IMR-90 (cell line): ENCODE measurements at regions of chr2 and their contacts with region 1.

Region 1: DNA sequence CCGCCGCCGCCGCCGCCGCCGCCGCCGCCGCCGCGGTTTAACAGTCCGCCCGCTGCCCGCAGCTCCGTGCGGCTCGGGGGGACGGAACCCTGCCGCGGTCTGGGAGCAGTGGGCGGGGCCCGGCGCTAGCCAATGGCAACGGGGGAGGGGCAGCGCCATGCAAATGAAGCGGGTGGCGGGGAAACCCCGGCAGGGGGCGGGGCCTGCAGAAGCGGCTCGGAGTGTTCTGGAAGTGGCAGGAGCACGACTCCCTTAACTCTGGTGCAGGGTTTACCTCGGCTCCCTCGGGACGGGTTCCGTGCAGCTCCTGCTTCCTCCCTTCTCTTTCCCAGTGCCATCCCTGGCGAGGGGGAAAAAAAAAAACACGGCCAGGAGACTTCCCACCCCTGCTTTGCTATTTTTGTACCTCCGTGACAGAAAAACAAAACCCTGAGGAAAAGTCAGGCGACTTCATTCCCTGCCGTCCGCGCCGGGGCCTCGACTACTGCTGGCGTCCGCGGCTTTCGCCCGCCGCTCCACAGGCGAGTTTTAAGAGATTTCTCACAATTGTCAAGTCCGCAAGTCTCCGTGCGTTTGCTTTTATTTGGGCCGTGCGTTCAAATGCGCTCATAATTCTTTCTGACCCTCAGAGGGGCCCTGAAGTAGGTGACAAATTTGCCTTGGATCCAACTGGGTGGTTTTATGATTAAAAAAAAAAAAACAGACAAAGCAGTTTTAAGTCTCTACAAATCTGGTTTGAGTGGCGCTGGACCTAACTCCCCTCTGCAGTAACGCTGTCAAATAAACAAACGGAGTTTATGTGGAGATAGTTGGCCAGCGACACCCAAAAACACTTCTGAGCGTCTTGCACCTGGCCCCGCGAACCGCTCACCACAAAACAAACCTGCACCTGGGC is at the start of gene KANSL1L:
- DNase-seq: peak; percentile 94
- ATAC-seq: peak; percentile 93
- H3K4me3 ChIP-seq: peak within 1 kb of the TSS; percentile 78
- H3K27ac ChIP-seq: peak within 1 kb of the TSS; percentile 97
- H3K4me1 ChIP-seq: no peaks in the 10 kb centered on the region
- H3K27me3 ChIP-seq: no peaks in the 10 kb centered on the region
- CTCF ChIP-seq: no peak
- POLR2A ChIP-seq: peak; percentile 57
- RAD21 ChIP-seq: no peak
- total RNA-seq, gene KANSL1L: 7.2 and 8.1 TPM in 2 replicates

Region 2: GRCh38 chr2:209990838-209991237 is 180.7 kb before region 1 on chr2:
- CTCF ChIA-PET with region 1: no interaction called
- POLR2A ChIA-PET with region 1: no interaction called
- dilution Hi-C with region 1: no loop called
- in situ Hi-C with region 1: loop called (anchors 10 kb)
- intact Hi-C with region 1: no loop called
- DNase-seq: no peak
- ATAC-seq: no peak
- H3K4me3 ChIP-seq: no peak overlapping the region
- H3K27ac ChIP-seq: no peak overlapping the region
- H3K4me1 ChIP-seq: no peaks in the 10 kb centered on the region
- H3K27me3 ChIP-seq: no peaks in the 10 kb centered on the region; the same call in none of the 2 replicates
- CTCF ChIP-seq: no peak
- POLR2A ChIP-seq: no peak
- RAD21 ChIP-seq: no peak

Region 3: GRCh38 chr2:210002158-210003157 is 169.1 kb before region 1 on chr2 and contains the start of gene RPE:
- CTCF ChIA-PET with region 1: no interaction called
- POLR2A ChIA-PET with region 1: no interaction called
- dilution Hi-C with region 1: no loop called
- in situ Hi-C with region 1: loop called (anchors 10 kb)
- intact Hi-C with region 1: loop called (anchors 1 kb)
- DNase-seq: peak; percentile 88
- ATAC-seq: peak; percentile 100
- H3K4me3 ChIP-seq: peak within 1 kb of the TSS; percentile 94
- H3K27ac ChIP-seq: peak within 1 kb of the TSS; percentile 76
- H3K4me1 ChIP-seq: peaks cover 5% of the 10 kb centered on the region
- H3K27me3 ChIP-seq: no peaks in the 10 kb centered on the region
- CTCF ChIP-seq: no peak
- POLR2A ChIP-seq: peak; percentile 58; the same call in 1 of the 2 replicates
- RAD21 ChIP-seq: no peak
- total RNA-seq, gene RPE: 114 and 339 TPM in 2 replicates

Region 4: GRCh38 chr2:210072922-210073509 is 98.5 kb before region 1 on chr2:
- CTCF ChIA-PET with region 1: interaction called, 3 read pairs
- POLR2A ChIA-PET with region 1: no interaction called
- dilution Hi-C with region 1: no loop called
- in situ Hi-C with region 1: no loop called
- intact Hi-C with region 1: loop called (anchors 2 kb)
- DNase-seq: peak; percentile 60
- ATAC-seq: peak; percentile 73
- H3K4me3 ChIP-seq: no peak overlapping the region
- H3K27ac ChIP-seq: no peak overlapping the region
- H3K4me1 ChIP-seq: no peaks in the 10 kb centered on the region; the same call in 1 of the 2 replicates
- H3K27me3 ChIP-seq: no peaks in the 10 kb centered on the region
- CTCF ChIP-seq: peak; percentile 74
- POLR2A ChIP-seq: no peak
- RAD21 ChIP-seq: peak; percentile 53

Region 5: GRCh38 chr2:210092791-210093190 is 78.8 kb before region 1 on chr2:
- CTCF ChIA-PET with region 1: no interaction called
- POLR2A ChIA-PET with region 1: no interaction called
- dilution Hi-C with region 1: no loop called
- in situ Hi-C with region 1: no loop called
- intact Hi-C with region 1: loop called (anchors 5 kb)
- DNase-seq: no peak
- ATAC-seq: no peak
- H3K4me3 ChIP-seq: no peak overlapping the region
- H3K27ac ChIP-seq: no peak overlapping the region
- H3K4me1 ChIP-seq: no peaks in the 10 kb centered on the region
- H3K27me3 ChIP-seq: no peaks in the 10 kb centered on the region
- CTCF ChIP-seq: no peak
- POLR2A ChIP-seq: no peak
- RAD21 ChIP-seq: no peak

Region 6: GRCh38 chr2:210267698-210268097 is 96.1 kb after region 1 on chr2:
- CTCF ChIA-PET with region 1: no interaction called
- POLR2A ChIA-PET with region 1: no interaction called
- dilution Hi-C with region 1: no loop called
- in situ Hi-C with region 1: no loop called
- intact Hi-C with region 1: no loop called
- DNase-seq: no peak
- ATAC-seq: no peak
- H3K4me3 ChIP-seq: no peak overlapping the region
- H3K27ac ChIP-seq: no peak overlapping the region
- H3K4me1 ChIP-seq: no peaks in the 10 kb centered on the region
- H3K27me3 ChIP-seq: no peaks in the 10 kb centered on the region
- CTCF ChIP-seq: no peak
- POLR2A ChIP-seq: no peak
- RAD21 ChIP-seq: no peak

Region 7: GRCh38 chr2:210337159-210337558 is 165.6 kb after region 1 on chr2:
- CTCF ChIA-PET with region 1: no interaction called
- POLR2A ChIA-PET with region 1: no interaction called
- dilution Hi-C with region 1: no loop called
- in situ Hi-C with region 1: no loop called
- intact Hi-C with region 1: no loop called
- DNase-seq: no peak
- ATAC-seq: no peak
- H3K4me3 ChIP-seq: no peak overlapping the region
- H3K27ac ChIP-seq: no peak overlapping the region
- H3K4me1 ChIP-seq: no peaks in the 10 kb centered on the region
- H3K27me3 ChIP-seq: no peaks in the 10 kb centered on the region
- CTCF ChIP-seq: no peak
- POLR2A ChIP-seq: no peak
- RAD21 ChIP-seq: no peak